HepG2 (cell line): ENCODE measurements at regions of chrX and their contacts with region 1.

Region 1: DNA sequence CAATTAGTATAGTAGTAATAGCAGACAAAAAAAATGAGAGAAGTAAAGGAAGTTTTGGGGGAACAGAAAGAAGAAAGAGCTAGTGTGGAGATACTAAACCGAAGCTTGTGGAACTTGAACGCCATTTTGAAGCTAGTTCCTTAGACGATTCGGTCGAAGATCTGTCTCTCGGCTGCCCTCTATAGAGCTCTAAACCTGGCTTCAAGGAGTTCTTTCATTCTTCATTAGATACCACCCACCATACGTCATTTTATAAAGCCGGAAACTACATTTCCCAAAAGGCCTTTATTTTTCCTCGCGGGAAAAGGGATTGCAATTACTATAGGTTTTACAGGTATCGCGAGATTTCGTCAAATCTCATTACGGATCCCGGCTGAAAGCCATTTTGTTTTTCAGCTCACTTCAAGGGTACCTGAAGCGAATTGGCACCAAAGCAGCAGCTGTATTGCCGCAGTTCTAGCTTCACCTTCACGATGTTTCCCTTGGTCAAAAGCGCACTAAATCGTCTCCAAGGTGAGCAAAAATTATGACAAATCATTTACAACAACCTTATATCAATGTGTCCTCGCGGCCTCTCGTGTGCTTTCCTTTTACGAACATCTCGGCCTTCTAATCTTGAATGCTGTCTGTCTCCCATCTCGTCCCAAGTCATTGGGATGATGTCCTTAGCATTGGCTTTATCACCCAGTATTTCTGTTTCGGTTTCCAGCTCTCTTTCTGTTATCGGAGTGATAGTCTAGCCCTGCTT is at the start of gene COX7B:
- DNase-seq: peak; percentile 96
- ATAC-seq: peak; percentile 67
- H3K4me3 ChIP-seq: peak within 1 kb of the TSS; percentile 67 to 78 (median 70)
- H3K27ac ChIP-seq: peak within 1 kb of the TSS; percentile 85
- H3K4me1 ChIP-seq: peaks cover 15% of the 10 kb centered on the region; the same call in 1 of the 2 replicates
- H3K27me3 ChIP-seq: no peaks in the 10 kb centered on the region; a peak in 1 of 5 replicates
- CTCF ChIP-seq: peak; percentile 56
- EP300 ChIP-seq: no peak
- POLR2A ChIP-seq: peak; percentile 75 to 85
- RAD21 ChIP-seq: no peak
- total RNA-seq, gene COX7B: 375 and 491 TPM in 2 replicates

Region 2: DNA sequence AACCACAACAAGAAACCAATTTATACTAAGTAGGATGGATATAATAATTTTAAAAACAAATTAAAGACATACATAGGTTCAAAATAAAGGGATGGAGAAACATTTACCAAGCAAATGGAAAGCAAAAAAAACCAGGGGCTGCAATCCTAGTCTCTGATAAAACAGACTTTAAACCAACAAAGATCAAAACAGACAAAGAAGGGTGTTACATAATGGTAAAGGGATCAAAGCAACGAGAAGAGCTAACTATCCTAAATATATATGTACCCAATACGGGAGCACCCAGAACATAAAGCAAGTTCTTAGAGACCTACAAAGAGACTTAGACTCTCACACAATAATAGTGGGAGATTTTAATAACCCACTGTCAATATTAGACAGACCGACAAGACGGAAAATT is 179.9 kb before region 1 on chrX:
- CTCF ChIA-PET with region 1: no interaction called
- POLR2A ChIA-PET with region 1: no interaction called
- in situ Hi-C with region 1: no loop called
- intact Hi-C with region 1: loop called (anchors 10 kb)
- DNase-seq: peak; percentile 31
- ATAC-seq: no peak
- H3K4me3 ChIP-seq: no peak overlapping the region
- H3K27ac ChIP-seq: no peak overlapping the region
- H3K4me1 ChIP-seq: peaks cover 14% of the 10 kb centered on the region
- H3K27me3 ChIP-seq: no peaks in the 10 kb centered on the region
- CTCF ChIP-seq: no peak
- EP300 ChIP-seq: no peak
- POLR2A ChIP-seq: no peak
- RAD21 ChIP-seq: no peak

Region 3: GRCh38 chrX:77785486-77786364 is 113.5 kb before region 1 on chrX and contains the start of gene ATRX:
- CTCF ChIA-PET with region 1: no interaction called
- POLR2A ChIA-PET with region 1: interaction called, 3 read pairs
- in situ Hi-C with region 1: no loop called
- intact Hi-C with region 1: loop called (anchors 5 kb)
- DNase-seq: peak; percentile 82
- ATAC-seq: peak; percentile 92
- H3K4me3 ChIP-seq: peak within 1 kb of the TSS; percentile 80 to 84 (median 81)
- H3K27ac ChIP-seq: peak within 1 kb of the TSS; percentile 95
- H3K4me1 ChIP-seq: 0 out of 2 replicates have a peak, but pooled peaks cover 7% of the 10 kb centered on the region
- H3K27me3 ChIP-seq: no peaks in the 10 kb centered on the region; a peak in 1 of 5 replicates
- CTCF ChIP-seq: no peak
- EP300 ChIP-seq: 0 out of 4 replicates have a peak, but pooled peaks of 1 of the 2 experiments have one; percentile 36
- POLR2A ChIP-seq: peak; percentile 73 to 80
- RAD21 ChIP-seq: no peak; the same call in 1 of the 2 replicates
- total RNA-seq, gene ATRX: 44.5 and 55.4 TPM in 2 replicates

Region 4: DNA sequence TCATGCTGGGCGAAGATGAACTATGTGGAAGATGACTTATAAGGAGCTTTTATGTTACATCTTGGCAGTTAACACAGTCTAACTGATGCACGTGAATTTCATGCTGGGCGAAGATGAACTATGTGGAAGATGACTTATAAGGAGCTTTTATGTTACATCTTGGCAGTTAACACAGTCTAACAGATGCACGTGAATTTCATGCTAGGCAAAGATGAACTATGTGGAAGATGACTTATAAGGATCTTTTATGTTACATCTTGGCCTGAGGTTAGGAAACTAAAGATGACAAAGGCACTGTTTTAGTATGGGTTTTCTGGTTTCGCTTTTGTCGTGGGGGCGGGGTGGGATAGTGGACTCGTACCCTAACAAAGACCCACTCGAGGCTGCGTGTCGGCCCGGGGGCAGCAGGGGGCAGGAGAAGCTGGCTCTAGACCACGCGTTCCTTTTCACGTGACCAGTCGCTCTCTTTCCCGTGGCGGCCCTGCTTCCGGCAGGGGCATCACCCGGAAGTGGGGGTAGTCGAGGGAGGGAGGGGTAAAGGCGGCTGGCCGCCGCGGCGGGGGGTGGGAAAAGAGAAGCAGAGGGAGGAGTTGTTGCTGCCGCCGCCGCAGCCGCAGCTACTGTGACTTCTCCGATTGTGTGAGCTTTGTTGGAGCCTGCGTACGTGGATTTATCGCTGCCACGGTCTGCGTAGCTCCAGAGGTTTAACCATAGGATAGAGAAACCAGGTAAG is 11.0 kb after region 1 on chrX and contains the start of gene ATP7A:
- CTCF ChIA-PET with region 1: no interaction called
- POLR2A ChIA-PET with region 1: interaction called, 23 read pairs
- in situ Hi-C with region 1: no loop called
- intact Hi-C with region 1: no loop called
- DNase-seq: peak; percentile 84
- ATAC-seq: peak; percentile 97
- H3K4me3 ChIP-seq: peak within 1 kb of the TSS; percentile 66 to 77 (median 73)
- H3K27ac ChIP-seq: peak within 1 kb of the TSS; percentile 68
- H3K4me1 ChIP-seq: no peaks in the 10 kb centered on the region
- H3K27me3 ChIP-seq: no peaks in the 10 kb centered on the region
- CTCF ChIP-seq: peak; percentile 84
- EP300 ChIP-seq: peak in 1 of 2 experiments; percentile 27; a peak in 1 of 4 replicates
- POLR2A ChIP-seq: peak; percentile 52 to 53; a peak in 3 of 4 replicates
- RAD21 ChIP-seq: peak; percentile 41; the same call in 1 of the 2 replicates
- total RNA-seq, gene ATP7A: 3.9 and 4.7 TPM in 2 replicates

Region 5: DNA sequence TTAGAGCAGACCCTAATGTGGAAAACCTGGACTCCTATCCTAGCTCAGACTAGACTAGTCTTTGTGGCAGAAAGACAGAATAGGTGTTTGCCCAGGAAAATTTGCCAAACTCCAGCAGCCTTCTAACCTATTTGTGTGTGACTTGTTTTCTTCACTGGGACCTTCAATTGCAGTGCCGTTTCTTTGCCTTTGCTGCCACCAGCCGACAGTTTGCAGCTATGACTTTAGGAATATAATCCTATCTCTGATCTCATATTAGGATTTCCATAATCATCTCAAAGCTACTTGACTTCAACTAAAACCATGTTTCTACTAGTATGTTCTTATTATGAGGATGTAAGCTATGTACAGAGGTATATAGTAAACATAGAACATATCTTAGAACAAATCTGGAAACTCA is 130.4 kb after region 1 on chrX:
- CTCF ChIA-PET with region 1: no interaction called
- POLR2A ChIA-PET with region 1: no interaction called
- in situ Hi-C with region 1: loop called (anchors 10 kb)
- intact Hi-C with region 1: no loop called
- DNase-seq: peak; percentile 11
- ATAC-seq: peak; percentile 58
- H3K4me3 ChIP-seq: no peak overlapping the region
- H3K27ac ChIP-seq: no peak overlapping the region
- H3K4me1 ChIP-seq: peaks cover 1% of the 10 kb centered on the region; the same call in 1 of the 2 replicates
- H3K27me3 ChIP-seq: no peaks in the 10 kb centered on the region
- CTCF ChIP-seq: peak; percentile 69
- EP300 ChIP-seq: no peak
- POLR2A ChIP-seq: no peak
- RAD21 ChIP-seq: no peak

Region 6: GRCh38 chrX:78092296-78092695 is 193.0 kb after region 1 on chrX:
- CTCF ChIA-PET with region 1: no interaction called
- POLR2A ChIA-PET with region 1: no interaction called
- in situ Hi-C with region 1: no loop called
- intact Hi-C with region 1: no loop called
- DNase-seq: peak; percentile 12
- ATAC-seq: peak; percentile 99
- H3K4me3 ChIP-seq: peak overlapping the region in 1 of 3 experiments; percentile 23; a peak in 1 of 6 replicates
- H3K27ac ChIP-seq: no peak overlapping the region
- H3K4me1 ChIP-seq: peaks cover 8% of the 10 kb centered on the region; the same call in 1 of the 2 replicates
- H3K27me3 ChIP-seq: no peaks in the 10 kb centered on the region
- CTCF ChIP-seq: peak; percentile 70
- EP300 ChIP-seq: no peak
- POLR2A ChIP-seq: no peak
- RAD21 ChIP-seq: no peak

Region 7: DNA sequence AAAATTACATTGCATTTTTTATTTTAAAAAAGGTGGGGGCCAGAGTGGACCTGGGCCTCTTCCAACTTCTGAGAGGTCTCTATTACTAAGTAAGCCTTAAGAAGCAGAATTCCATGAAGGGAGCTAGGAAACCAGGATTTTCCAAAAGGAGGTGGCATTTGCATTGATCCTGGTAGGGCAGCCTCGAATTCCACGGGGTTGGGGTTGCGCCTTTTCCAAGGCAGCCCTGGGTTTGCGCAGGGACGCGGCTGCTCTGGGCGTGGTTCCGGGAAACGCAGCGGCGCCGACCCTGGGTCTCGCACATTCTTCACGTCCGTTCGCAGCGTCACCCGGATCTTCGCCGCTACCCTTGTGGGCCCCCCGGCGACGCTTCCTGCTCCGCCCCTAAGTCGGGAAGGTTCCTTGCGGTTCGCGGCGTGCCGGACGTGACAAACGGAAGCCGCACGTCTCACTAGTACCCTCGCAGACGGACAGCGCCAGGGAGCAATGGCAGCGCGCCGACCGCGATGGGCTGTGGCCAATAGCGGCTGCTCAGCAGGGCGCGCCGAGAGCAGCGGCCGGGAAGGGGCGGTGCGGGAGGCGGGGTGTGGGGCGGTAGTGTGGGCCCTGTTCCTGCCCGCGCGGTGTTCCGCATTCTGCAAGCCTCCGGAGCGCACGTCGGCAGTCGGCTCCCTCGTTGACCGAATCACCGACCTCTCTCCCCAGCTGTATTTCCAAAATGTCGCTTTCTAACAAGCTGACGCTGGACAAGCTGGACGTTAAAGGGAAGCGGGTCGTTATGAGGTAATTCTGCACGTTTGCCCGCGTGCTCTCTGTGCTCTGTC is 204.6 kb after region 1 on chrX and contains the start of gene PGK1:
- CTCF ChIA-PET with region 1: no interaction called
- POLR2A ChIA-PET with region 1: no interaction called
- in situ Hi-C with region 1: loop called (anchors 25 kb)
- intact Hi-C with region 1: loop called (anchors 5 kb)
- DNase-seq: peak; percentile 87
- ATAC-seq: peak; percentile 99
- H3K4me3 ChIP-seq: peak within 1 kb of the TSS; percentile 74 to 87 (median 80)
- H3K27ac ChIP-seq: peak within 1 kb of the TSS; percentile 88
- H3K4me1 ChIP-seq: peaks cover 39% of the 10 kb centered on the region
- H3K27me3 ChIP-seq: no peaks in the 10 kb centered on the region; a peak in 1 of 5 replicates
- CTCF ChIP-seq: no peak; the same call in 1 of the 2 replicates
- EP300 ChIP-seq: peak in 1 of 2 experiments; percentile 70; a peak in 1 of 4 replicates
- POLR2A ChIP-seq: peak; percentile 86 to 90
- RAD21 ChIP-seq: no peak
- total RNA-seq, gene PGK1: 325 and 530 TPM in 2 replicates